K562 (cell line): ENCODE measurements at regions of chr12 and their contacts with region 1.

Region 1: DNA sequence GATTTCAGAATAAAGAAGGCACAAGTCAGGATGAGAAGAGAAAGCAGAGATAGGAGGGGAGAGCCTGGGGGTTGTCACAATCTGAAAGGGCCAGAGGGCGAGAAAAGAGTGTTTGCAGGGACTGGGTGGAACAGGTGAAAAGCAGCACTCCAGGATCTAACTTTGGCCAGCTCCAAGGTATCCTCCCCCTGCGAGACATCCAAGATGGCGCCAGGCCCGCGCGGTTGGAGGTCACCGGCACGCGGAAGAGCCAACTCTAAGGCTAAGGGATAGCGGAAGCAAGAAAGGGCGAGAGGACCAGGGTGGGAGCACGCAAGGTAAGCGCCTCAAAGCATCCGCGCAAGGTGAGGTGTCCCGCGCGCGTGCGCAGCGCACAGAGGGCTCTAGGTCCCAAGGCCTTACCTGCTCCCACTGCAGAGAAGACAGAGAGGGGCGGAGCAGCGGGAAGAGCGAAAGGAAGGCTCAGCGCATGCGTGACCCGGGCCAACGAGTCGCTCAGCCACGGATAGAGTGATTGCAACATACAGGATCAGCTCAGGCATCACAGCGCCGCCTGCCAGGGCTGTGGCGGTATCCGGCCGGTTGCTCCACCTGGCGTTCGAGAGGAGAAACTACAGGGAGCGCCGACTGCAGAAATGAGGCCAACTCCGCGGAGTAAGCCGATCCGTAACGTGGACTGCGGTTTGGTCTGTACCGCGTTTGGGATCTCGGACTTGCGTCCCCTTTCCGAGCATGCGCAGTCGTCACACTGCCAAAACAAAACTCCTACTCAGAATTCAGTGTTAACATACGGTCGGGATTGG is at the start of gene ATP5MC2:
- DNase-seq: peak; percentile 97 to 99 (median 98)
- ATAC-seq: peak; percentile 98
- H3K4me3 ChIP-seq: peak within 1 kb of the TSS; percentile 64
- H3K27ac ChIP-seq: peak within 1 kb of the TSS; percentile 95
- H3K4me1 ChIP-seq: peaks cover 8 to 14% of the 10 kb centered on the region in 2 experiments; a peak in 3 of 5 replicates
- H3K27me3 ChIP-seq: peaks cover 0 to 4% of the 10 kb centered on the region in 2 experiments; a peak in 2 of 5 replicates
- CTCF ChIP-seq: peak; percentile 100
- EP300 ChIP-seq: peak; percentile 53; the same call in 1 of the 2 replicates
- POLR2A ChIP-seq: peak; percentile 98
- RAD21 ChIP-seq: peak; percentile 98 to 99
- polyA plus RNA-seq, gene ATP5MC2: 1,200 to 1,208 TPM

Region 2: DNA sequence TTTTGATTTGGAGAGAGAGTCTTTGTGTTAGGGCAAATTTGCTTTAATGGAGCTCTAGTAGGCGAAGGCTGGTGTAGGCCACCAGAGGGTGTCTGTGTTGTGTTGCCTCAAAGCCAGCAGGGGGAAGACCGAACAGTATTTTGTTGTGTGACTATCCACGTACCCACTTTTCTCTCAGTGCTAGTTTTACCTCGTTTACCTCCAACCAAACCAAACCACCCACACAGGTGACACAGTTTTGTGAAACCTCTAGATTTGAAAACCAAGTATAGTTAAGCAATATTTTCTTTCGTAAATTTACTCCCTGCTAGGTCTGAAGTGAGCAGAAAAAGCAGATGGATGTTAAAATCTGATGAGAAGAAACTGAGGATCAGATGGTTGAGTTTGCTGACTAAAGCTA is 132.3 kb before region 1 on chr12:
- CTCF ChIA-PET with region 1: interaction called, 59 read pairs
- POLR2A ChIA-PET with region 1: interaction called, 14 read pairs
- in situ Hi-C with region 1: loop called (anchors 5 kb)
- intact Hi-C with region 1: loop called (anchors 1 kb)
- DNase-seq: peak; percentile 42 to 63 (median 58)
- ATAC-seq: peak; percentile 98
- H3K4me3 ChIP-seq: no peak overlapping the region
- H3K27ac ChIP-seq: no peak overlapping the region
- H3K4me1 ChIP-seq: no peaks in the 10 kb centered on the region; a peak in 1 of 5 replicates
- H3K27me3 ChIP-seq: no peaks in the 10 kb centered on the region
- CTCF ChIP-seq: peak; percentile 82 to 99 (median 98)
- EP300 ChIP-seq: no peak
- POLR2A ChIP-seq: no peak
- RAD21 ChIP-seq: peak; percentile 50 to 75

Region 3: DNA sequence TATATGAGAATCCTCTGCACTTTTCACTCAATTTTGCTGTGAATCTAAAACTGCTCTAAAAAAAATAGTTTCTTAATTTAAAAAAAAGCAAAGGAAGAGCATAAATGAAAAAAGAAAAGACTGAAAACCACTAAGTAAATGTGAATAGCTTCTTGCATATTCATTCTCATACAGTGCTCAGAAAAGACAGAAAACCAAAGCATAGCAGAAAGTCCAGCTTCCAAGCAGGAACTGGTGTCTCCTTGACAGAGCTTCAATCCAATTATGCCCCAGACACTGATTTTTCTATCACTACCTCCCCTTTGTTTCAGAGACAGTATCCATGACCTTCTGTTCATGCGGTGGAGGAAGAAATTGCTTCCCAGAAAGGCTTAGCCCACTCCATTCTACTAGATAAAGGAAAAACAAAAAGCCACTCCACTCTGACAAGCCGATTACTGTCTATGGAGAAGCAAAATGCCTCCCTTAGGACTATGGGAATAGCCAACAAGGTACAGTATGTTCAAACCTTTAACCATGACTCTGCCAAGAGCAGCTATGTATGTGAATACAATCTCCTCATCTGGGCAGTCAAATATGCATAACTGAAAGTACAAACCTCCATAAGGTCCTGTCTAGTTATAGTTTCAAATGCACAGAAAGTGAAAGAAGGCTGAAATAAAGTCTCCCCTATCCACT is 90.3 kb before region 1 on chr12:
- CTCF ChIA-PET with region 1: no interaction called
- POLR2A ChIA-PET with region 1: no interaction called
- in situ Hi-C with region 1: no loop called
- intact Hi-C with region 1: no loop called
- DNase-seq: no peak
- ATAC-seq: no peak
- H3K4me3 ChIP-seq: no peak overlapping the region
- H3K27ac ChIP-seq: no peak overlapping the region
- H3K4me1 ChIP-seq: no peaks in the 10 kb centered on the region; a peak in 1 of 5 replicates
- H3K27me3 ChIP-seq: no peaks in the 10 kb centered on the region
- CTCF ChIP-seq: no peak
- EP300 ChIP-seq: no peak
- POLR2A ChIP-seq: no peak
- RAD21 ChIP-seq: no peak

Region 4: DNA sequence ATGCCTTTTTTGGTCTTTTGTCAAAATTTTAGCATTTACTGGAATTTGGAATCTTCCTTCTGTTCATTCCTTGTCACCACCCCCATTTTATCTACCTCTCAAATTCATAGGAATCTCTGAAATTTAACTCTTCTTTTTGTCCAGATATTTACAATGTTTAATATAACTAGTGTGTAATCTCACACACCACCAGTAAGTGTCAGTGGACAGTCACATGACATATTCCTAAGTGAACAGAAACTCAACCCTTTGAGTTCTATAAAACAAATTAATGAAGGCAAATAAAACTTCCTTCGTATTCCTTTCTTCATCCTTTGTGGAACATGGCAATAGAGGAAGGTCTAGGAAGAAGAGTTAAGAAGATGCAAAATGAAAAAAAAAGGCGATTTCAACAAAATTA is 76.3 kb before region 1 on chr12:
- CTCF ChIA-PET with region 1: interaction called, 14 read pairs
- POLR2A ChIA-PET with region 1: interaction called, 3 read pairs
- in situ Hi-C with region 1: no loop called
- intact Hi-C with region 1: loop called (anchors 1 kb)
- DNase-seq: peak in 1 of 4 experiments; percentile 20
- ATAC-seq: no peak
- H3K4me3 ChIP-seq: no peak overlapping the region
- H3K27ac ChIP-seq: no peak overlapping the region
- H3K4me1 ChIP-seq: no peaks in the 10 kb centered on the region
- H3K27me3 ChIP-seq: no peaks in the 10 kb centered on the region
- CTCF ChIP-seq: peak in 2 of 3 experiments; percentile 48 to 53; a peak in 3 of 6 replicates
- EP300 ChIP-seq: no peak
- POLR2A ChIP-seq: no peak
- RAD21 ChIP-seq: peak in 1 of 2 experiments; percentile 42; a peak in 1 of 4 replicates

Region 5: GRCh38 chr12:53625946-53626701 is 49.7 kb before region 1 on chr12 and contains the start of gene ATF7:
- CTCF ChIA-PET with region 1: interaction called, 4 read pairs
- POLR2A ChIA-PET with region 1: interaction called, 6 read pairs
- in situ Hi-C with region 1: no loop called
- intact Hi-C with region 1: loop called (anchors 2 kb)
- DNase-seq: peak; percentile 97 to 99 (median 98)
- ATAC-seq: peak; percentile 95
- H3K4me3 ChIP-seq: peak within 1 kb of the TSS; percentile 60
- H3K27ac ChIP-seq: peak within 1 kb of the TSS; percentile 98
- H3K4me1 ChIP-seq: peaks cover 8 to 10% of the 10 kb centered on the region in 2 experiments; a peak in 3 of 5 replicates
- H3K27me3 ChIP-seq: no peaks in the 10 kb centered on the region
- CTCF ChIP-seq: no peak
- EP300 ChIP-seq: no peak; the same call in 1 of the 2 replicates
- POLR2A ChIP-seq: peak; percentile 89
- RAD21 ChIP-seq: no peak
- polyA plus RNA-seq, gene ATF7: 28.9 to 30.4 TPM

Region 6: DNA sequence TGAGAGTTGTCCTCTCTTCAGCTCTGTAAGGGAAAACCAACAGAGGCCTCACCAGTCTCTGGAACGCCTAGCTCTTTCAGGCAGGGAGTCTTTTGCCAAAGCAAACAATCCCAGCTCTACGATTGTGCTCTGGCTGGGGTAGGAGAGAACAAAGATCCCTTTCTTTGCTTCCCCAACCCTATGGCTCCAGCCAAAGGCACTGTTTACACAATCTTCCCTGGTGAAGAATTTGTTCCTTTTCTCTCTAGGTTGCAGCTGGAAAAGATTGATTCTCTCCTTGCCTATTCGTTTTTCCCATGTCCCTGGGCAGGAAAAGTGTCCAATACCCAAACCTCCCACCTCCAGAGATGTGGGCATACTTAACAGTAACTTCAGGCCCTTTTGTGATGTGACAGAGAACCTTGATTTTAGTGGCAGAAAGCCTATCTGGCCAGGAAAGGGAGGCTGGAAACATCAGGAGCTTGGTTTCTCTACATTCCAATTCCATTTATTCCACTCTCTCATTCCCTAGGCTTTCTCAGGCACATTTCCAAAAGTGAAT is 16.8 kb before region 1 on chr12:
- CTCF ChIA-PET with region 1: no interaction called
- POLR2A ChIA-PET with region 1: interaction called, 11 read pairs
- in situ Hi-C with region 1: no loop called
- intact Hi-C with region 1: no loop called
- DNase-seq: no peak
- ATAC-seq: no peak
- H3K4me3 ChIP-seq: no peak overlapping the region
- H3K27ac ChIP-seq: no peak overlapping the region
- H3K4me1 ChIP-seq: 0 out of 5 replicates have a peak, but pooled peaks cover 0 to 5% of the 10 kb centered on the region in 2 experiments
- H3K27me3 ChIP-seq: no peaks in the 10 kb centered on the region
- CTCF ChIP-seq: no peak
- EP300 ChIP-seq: no peak
- POLR2A ChIP-seq: no peak
- RAD21 ChIP-seq: no peak